Activated CD4-positive, alpha-beta T cell treated with anti-CD3 and anti-CD28 coated beads, Interleukin-2, amount 10 ng/mL, durations not matched to agents 24 days and 14 days (primary cell): ENCODE measurements at regions of chr19 and their contacts with region 1.

Region 1: DNA sequence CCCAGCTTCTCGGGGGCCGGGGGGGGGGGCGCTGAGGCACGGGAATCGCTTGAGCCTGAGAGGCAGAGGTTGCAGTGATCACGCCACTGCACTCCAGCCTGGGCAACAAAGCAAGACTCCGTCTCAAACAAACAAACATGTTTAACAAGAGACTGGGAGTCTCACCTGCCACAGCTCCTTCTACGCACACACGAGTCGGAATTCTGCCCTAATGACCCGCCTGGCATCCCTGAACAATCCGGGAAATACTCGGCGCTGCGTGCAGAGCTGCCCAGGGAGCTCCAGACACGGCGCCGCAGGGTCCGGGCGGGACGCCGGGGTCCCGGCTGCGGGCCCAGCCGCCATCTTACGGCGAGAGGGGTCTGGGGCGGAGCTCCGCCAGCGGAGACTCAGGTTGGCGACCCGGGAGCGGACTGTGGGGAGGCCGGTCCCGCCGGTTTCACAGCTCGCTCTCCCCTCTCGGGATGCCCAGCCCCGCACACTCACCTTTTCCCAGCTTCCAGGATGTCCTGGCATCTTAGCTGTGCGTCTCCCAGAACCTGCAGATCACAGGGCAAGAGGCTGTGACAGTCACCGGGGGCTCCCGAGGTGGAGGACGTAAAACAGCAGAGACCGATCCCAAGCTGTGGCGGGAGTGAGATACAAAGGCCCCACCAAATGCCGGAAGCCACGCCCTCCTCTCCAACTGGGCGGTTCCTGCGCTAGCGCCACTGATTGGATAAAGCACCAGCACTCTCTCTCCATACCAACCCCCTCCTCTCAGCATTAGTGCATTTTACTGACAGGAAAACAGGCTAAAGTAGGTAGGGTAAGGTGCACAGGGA is 23.6 kb upstream of the ZNF724 start:
- DNase-seq: peak; percentile 97
- H3K4me3 Mint-ChIP-seq: peak overlapping the region; percentile 97
- H3K27ac Mint-ChIP-seq: peak overlapping the region; percentile 95
- H3K4me1 Mint-ChIP-seq: peaks cover 14% of the 10 kb centered on the region
- H3K27me3 Mint-ChIP-seq: no peaks in the 10 kb centered on the region

Region 2: GRCh38 chr19:23190341-23190740 is 83.5 kb before region 1 on chr19:
- intact Hi-C with region 1: no loop called
- DNase-seq: no peak
- H3K4me3 Mint-ChIP-seq: no peak overlapping the region
- H3K27ac Mint-ChIP-seq: no peak overlapping the region
- H3K4me1 Mint-ChIP-seq: no peaks in the 10 kb centered on the region
- H3K27me3 Mint-ChIP-seq: no peaks in the 10 kb centered on the region

Region 3: GRCh38 chr19:23249911-23250649 is 23.7 kb before region 1 on chr19 and contains the start of gene ZNF724:
- intact Hi-C with region 1: loop called (anchors 1 kb)
- DNase-seq: peak; percentile 96
- H3K4me3 Mint-ChIP-seq: peak within 1 kb of the TSS; percentile 98
- H3K27ac Mint-ChIP-seq: peak within 1 kb of the TSS; percentile 98
- H3K4me1 Mint-ChIP-seq: peaks cover 7% of the 10 kb centered on the region
- H3K27me3 Mint-ChIP-seq: no peaks in the 10 kb centered on the region
- total RNA-seq, gene ZNF724: 15.5 and 16.1 TPM in 2 replicates

Region 4: DNA sequence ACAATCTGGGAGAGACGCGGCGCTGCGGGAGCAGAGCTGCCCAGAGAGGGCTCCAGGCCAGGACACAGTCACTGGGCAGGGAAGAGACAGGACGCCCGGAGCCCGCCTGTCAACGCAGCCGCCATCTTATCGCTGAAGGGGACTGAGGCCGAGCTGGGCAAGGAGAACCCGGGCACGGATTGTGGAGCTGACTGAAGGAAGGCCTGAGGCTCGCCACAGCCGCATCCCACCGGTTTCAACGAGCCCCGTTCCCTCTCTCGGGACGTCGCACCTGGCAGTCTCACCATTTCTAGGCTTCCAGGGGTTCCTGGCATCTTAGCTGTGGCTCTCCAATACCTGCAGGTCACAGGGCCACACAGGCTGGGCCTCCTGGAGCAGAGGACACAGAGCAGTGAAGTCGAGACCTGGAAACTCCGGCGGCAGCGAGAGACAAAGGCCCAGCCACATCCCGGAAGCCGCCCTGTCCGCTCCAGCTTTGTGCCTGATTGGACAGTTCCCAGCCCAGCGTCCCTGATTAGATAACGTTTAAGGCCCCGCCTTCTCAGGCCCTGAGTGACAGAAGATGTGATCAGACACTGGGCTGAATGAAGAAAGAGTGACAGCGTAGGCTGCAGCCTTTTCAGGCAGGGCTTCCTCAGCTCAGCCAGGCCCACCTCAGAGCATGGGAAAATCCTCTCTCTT is 121.4 kb after region 1 on chr19 and contains the start of gene ZNF91:
- intact Hi-C with region 1: loop called (anchors 2 kb)
- DNase-seq: peak; percentile 96
- H3K4me3 Mint-ChIP-seq: peak within 1 kb of the TSS; percentile 97
- H3K27ac Mint-ChIP-seq: peak within 1 kb of the TSS; percentile 98
- H3K4me1 Mint-ChIP-seq: no peaks in the 10 kb centered on the region
- H3K27me3 Mint-ChIP-seq: no peaks in the 10 kb centered on the region
- total RNA-seq, gene ZNF91: 25.0 and 31.1 TPM in 2 replicates

Region 5: DNA sequence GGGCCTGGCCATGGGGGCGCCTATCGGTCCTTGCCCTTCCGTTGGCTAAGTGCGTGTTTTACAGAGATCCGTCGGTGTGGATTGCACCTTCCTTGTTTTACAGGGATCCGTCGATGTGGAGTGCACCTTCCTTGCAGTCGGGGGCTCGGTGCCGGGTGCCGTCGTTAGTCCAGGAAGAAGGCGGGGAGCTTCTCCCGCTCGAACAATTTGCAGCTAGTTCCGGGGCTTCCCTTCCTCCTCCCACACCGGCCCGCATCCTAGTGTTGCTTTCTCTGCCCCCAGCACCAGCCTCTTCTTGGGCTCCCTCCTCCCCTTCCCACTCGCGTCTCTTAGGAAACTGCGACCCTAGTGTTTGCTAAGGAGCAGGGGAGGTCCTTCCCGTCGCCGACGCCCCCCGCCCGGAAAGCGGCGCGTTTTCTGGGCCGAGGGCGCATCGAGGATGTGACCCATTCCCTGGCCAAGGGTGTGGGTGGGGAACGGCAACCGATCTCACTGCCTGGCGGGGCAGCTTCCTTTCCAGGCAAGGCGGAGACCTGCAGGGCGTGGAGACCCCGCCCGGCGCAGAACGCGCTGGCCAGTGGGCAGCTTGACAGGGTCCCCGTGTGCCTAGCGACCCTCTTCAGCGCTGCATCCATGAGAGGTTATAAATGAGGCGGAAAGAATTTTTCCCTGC is 197.2 kb after region 1 on chr19:
- intact Hi-C with region 1: no loop called
- DNase-seq: no peak
- H3K4me3 Mint-ChIP-seq: no peak overlapping the region
- H3K27ac Mint-ChIP-seq: no peak overlapping the region
- H3K4me1 Mint-ChIP-seq: no peaks in the 10 kb centered on the region
- H3K27me3 Mint-ChIP-seq: no peaks in the 10 kb centered on the region

Region 6: DNA sequence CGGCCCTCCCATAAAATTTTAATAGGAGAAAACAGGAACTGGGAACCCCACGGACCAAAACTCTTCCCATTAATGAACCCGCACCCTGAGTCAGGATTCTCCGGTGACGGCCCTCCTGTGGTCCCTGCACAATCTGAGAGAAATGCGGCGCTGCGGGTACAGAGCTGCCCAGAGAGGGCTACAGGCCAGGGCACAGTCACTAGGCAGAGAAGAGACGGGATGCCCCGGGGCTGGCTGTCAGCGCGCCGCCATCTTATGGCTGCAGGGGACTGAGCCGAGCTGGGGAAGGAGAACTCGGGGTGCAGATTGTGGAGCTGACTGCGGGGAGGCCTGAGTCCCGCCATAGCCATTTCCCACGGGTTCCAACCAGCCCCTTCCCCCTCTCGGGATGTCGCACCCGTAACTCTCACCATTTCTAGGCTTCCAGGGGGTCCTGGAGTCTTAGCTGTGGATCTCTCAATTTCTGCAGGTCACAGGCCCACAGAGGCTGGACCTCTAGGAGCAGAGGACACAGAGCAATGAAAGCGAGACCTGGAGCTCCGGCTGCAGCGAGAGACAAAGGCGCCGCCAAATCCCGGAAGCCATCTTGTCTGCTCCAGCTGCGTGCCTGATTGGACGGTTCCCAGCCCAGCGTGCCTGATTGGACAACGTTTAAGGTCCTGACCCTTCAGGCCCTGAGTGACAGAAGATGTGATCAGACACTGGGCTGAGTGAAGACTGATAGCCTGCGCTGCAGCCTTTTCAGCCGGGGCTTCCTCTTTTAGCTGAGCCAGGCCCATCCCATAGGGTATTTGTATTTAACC is 413.0 kb after region 1 on chr19 and contains the start of gene ZNF675:
- intact Hi-C with region 1: loop called (anchors 10 kb)
- DNase-seq: peak; percentile 96
- H3K4me3 Mint-ChIP-seq: peak within 1 kb of the TSS; percentile 97
- H3K27ac Mint-ChIP-seq: peak within 1 kb of the TSS; percentile 99
- H3K4me1 Mint-ChIP-seq: peaks cover 10% of the 10 kb centered on the region
- H3K27me3 Mint-ChIP-seq: no peaks in the 10 kb centered on the region
- total RNA-seq, gene ZNF675: 17.0 and 17.3 TPM in 2 replicates